ENCODE measurements at regions of chr11 and their contacts with region 1.

Region 1: GRCh38 chr11:2975594-2975993 is 16.5 kb downstream of the NAP1L4 start:
- DNase-seq: peak; percentile 69
- ATAC-seq: peak; percentile 86
- H3K4me3 Mint-ChIP-seq: no peak overlapping the region
- H3K27ac Mint-ChIP-seq: peak overlapping the region; percentile 64
- H3K4me1 Mint-ChIP-seq: peaks cover 41% of the 10 kb centered on the region
- H3K27me3 Mint-ChIP-seq: no peaks in the 10 kb centered on the region

Region 2: GRCh38 chr11:2708151-2708581 is 267.4 kb before region 1 on chr11:
- CTCF ChIA-PET with region 1: no interaction called
- DNase-seq: no peak
- ATAC-seq: no peak
- H3K4me3 Mint-ChIP-seq: no peak overlapping the region
- H3K27ac Mint-ChIP-seq: no peak overlapping the region
- H3K4me1 Mint-ChIP-seq: no peaks in the 10 kb centered on the region
- H3K27me3 Mint-ChIP-seq: peaks cover 4% of the 10 kb centered on the region

Region 3: GRCh38 chr11:2867722-2868505 is 107.7 kb before region 1 on chr11:
- CTCF ChIA-PET with region 1: no interaction called
- DNase-seq: no peak
- ATAC-seq: no peak
- H3K4me3 Mint-ChIP-seq: no peak overlapping the region
- H3K27ac Mint-ChIP-seq: no peak overlapping the region
- H3K4me1 Mint-ChIP-seq: peaks cover 4% of the 10 kb centered on the region
- H3K27me3 Mint-ChIP-seq: peaks cover 68% of the 10 kb centered on the region

Region 4: DNA sequence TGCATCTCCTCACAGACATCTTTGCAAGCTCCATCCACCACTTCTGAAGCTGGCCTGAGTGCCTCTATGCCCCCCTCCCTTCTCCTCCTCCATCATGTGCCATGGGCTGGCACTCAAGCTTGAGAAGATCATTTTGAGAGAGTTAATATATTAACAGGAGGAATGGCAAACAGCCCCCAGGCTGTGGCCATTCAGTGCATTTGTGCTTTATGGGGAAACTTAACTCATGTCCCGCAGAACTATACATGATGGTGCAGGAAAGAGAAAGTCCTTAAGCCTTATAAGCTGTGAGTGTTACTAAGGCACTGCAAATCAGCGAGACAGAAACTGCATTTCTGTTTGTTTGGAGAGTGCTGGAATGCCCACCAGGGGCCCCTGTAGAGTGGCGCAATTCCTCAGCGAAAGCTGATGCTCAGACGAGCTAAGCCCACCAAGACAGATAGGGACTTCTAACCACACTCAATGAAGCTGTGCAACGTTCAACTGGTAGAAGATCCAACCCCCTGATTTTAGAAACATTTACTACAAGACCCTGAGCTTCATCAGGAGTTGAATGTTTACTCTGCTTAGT is 19.6 kb before region 1 on chr11:
- CTCF ChIA-PET with region 1: interaction called, 22 read pairs
- DNase-seq: no peak
- ATAC-seq: no peak
- H3K4me3 Mint-ChIP-seq: no peak overlapping the region
- H3K27ac Mint-ChIP-seq: no peak overlapping the region
- H3K4me1 Mint-ChIP-seq: peaks cover 54% of the 10 kb centered on the region
- H3K27me3 Mint-ChIP-seq: no peaks in the 10 kb centered on the region

Region 5: DNA sequence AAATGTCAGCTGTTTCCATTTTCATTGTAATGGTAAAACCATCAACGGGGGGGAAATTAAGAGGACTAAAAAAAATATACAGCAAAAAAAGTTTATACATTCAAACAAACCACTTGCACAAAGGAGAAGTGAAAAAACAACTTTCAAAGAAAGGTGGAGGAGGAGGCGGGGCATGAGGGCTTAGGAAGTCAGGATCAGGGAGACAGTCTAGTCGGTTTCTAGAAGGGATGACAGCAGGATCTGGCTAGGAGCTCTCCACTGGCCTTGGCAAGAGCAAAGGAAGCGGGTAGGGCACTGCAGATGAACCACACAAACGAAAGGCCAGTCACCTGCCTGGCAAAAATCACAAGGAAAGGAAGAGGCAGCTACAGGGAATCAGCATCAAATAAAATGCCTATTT is 14.5 kb before region 1 on chr11:
- CTCF ChIA-PET with region 1: interaction called, 22 read pairs
- DNase-seq: no peak
- ATAC-seq: no peak
- H3K4me3 Mint-ChIP-seq: no peak overlapping the region
- H3K27ac Mint-ChIP-seq: peak overlapping the region; percentile 14
- H3K4me1 Mint-ChIP-seq: peaks cover 31% of the 10 kb centered on the region
- H3K27me3 Mint-ChIP-seq: no peaks in the 10 kb centered on the region

Region 6: DNA sequence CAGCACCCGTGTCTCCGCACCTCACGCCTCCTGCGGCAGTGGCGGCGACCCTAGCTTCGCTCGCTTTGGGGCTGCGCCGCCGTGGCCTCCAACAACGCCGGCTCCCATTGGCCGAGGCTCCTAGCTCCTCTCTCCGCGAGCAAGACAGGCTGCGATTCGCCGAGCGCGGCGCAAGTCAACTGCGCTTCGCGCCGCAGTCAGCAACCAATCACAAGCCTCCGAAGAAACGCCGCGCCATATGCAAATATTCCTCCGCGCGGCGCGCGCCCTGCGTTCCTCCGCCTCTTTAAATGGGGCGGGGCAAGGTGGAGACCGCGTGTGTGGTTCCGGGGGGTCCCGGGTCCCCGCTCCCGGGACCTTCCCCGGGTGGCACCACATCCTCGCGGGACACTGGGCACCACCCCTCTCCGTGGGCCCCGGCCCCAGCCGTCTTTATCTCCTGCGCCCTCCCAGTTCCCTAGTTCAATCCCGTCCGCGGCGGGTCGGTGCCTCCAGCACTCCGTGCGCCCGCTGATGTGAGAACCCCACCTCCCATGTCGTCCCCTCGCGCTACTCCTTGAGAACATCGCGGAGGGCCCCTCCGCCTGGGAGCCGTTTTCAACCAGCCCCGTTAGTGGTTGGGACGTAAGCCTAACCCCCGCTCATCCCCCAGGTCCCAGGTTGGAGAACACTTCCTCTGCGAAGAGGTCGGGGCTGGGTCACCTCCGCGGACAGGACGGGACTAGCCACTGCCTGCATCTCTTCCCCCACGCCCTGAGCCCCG is 16.8 kb after region 1 on chr11 and contains the start of gene NAP1L4:
- CTCF ChIA-PET with region 1: interaction called, 18 read pairs
- DNase-seq: peak; percentile 98
- ATAC-seq: peak; percentile 90
- H3K4me3 Mint-ChIP-seq: peak within 1 kb of the TSS; percentile 95
- H3K27ac Mint-ChIP-seq: peak within 1 kb of the TSS; percentile 98
- H3K4me1 Mint-ChIP-seq: peaks cover 15% of the 10 kb centered on the region
- H3K27me3 Mint-ChIP-seq: no peaks in the 10 kb centered on the region
- total RNA-seq, gene NAP1L4: 347 to 389 TPM

Region 7: GRCh38 chr11:3006505-3007183 is 31.1 kb after region 1 on chr11:
- CTCF ChIA-PET with region 1: interaction called, 11 read pairs
- DNase-seq: peak; percentile 90
- ATAC-seq: peak; percentile 98
- H3K4me3 Mint-ChIP-seq: peak overlapping the region; percentile 80
- H3K27ac Mint-ChIP-seq: peak overlapping the region; percentile 90
- H3K4me1 Mint-ChIP-seq: peaks cover 74% of the 10 kb centered on the region
- H3K27me3 Mint-ChIP-seq: no peaks in the 10 kb centered on the region

Region 8: DNA sequence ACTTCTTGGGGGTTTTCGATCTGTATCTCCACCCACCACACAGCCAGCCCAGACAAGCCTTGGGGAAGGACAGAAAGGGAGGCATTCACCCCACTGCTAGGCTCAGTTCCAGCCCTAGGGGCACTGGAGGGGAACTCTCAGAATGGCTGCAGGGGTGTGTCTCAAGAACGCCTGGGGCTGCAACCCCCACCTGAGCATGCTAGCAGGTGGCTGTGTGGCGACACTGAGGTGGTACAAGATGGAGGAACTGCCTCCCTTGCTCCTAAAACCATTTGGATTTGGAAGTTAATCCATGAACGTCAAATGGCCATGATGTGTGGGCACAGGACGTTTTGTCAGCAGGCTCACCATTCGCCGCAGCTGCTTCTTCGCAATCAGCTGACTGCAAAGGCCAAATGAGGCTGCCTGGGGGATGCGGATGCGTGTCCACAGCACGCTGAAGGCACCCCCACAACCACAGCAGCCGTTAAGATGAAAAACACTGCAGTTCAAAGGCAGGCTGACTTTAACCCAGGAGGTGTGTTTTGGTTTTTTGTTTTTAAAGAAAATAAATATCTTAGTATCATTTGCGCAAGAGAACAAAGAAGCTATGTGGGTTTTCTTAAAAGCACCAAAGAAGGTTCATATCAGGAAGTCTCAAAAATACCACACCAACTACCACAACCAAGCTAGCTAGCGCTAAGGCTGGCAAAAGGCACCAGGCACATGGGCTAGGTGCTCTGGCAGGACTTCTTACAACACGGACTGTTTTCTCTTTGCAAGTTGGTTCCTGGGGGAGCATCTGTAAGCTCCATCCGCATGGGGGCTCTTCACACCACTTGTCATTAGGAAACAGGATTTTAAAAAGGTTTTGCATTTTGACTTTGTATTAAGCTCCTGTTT is 38.7 kb after region 1 on chr11:
- CTCF ChIA-PET with region 1: interaction called, 41 read pairs
- DNase-seq: peak; percentile 95
- ATAC-seq: peak; percentile 83
- H3K4me3 Mint-ChIP-seq: peak overlapping the region; percentile 23
- H3K27ac Mint-ChIP-seq: peak overlapping the region; percentile 98
- H3K4me1 Mint-ChIP-seq: peaks cover 92% of the 10 kb centered on the region
- H3K27me3 Mint-ChIP-seq: no peaks in the 10 kb centered on the region

Region 9: GRCh38 chr11:3021125-3021524 is 45.5 kb after region 1 on chr11:
- CTCF ChIA-PET with region 1: interaction called, 41 read pairs
- DNase-seq: peak; percentile 68
- ATAC-seq: peak; percentile 74
- H3K4me3 Mint-ChIP-seq: no peak overlapping the region
- H3K27ac Mint-ChIP-seq: no peak overlapping the region
- H3K4me1 Mint-ChIP-seq: peaks cover 67% of the 10 kb centered on the region
- H3K27me3 Mint-ChIP-seq: no peaks in the 10 kb centered on the region